GM12878 (cell line): ENCODE measurements at regions of chr11 and their contacts with region 1.

Region 1: DNA sequence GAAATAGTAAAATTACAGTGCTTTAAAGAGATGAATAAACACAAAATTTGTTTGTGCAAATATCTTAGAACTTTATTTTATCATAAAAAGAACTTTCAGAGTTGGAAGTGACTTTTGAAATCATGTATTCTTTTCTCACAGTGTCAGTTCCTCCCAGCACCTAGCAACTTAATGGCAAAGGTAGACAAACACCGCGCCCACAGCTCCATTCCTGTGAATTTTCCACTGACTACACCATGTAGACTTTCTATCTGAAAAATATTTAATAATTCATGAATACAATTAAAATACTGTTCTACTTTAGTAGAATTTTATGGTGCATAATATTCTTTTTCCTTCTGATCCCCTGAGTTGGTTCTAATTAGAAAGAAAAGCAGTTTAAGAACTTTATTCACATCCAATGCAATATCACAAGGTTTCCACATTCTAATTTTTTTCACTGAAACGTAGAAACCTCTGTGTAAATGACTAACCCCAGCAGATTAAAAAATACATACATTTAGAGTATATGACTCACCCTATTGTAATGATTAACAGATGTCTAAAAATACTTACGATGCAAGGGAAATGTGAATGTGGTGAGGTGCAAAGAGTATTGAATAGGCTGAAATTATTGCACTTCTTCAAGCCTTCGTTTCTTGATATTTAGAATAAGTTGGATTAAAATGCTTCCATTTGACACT is 218.2 kb upstream of the CCDC179 start:
- DNase-seq: no peak
- ATAC-seq: peak; percentile 90
- H3K4me3 ChIP-seq: no peak overlapping the region
- H3K27ac ChIP-seq: no peak overlapping the region
- H3K4me1 ChIP-seq: no peaks in the 10 kb centered on the region
- H3K27me3 ChIP-seq: no peaks in the 10 kb centered on the region
- CTCF ChIP-seq: no peak
- EP300 ChIP-seq: peak; percentile 21 to 67; a peak in 1 of 4 replicates
- POLR2A ChIP-seq: no peak
- RAD21 ChIP-seq: no peak

Region 2: GRCh38 chr11:22510741-22511140 is 567.7 kb before region 1 on chr11:
- CTCF ChIA-PET with region 1: no interaction called
- POLR2A ChIA-PET with region 1: no interaction called
- RAD21 ChIA-PET with region 1: no interaction called
- SMC1A ChIA-PET with region 1: no interaction called
- in situ Hi-C with region 1: no loop called
- intact Hi-C with region 1: no loop called
- DNase-seq: no peak
- ATAC-seq: no peak
- H3K4me3 ChIP-seq: no peak overlapping the region
- H3K27ac ChIP-seq: no peak overlapping the region
- H3K4me1 ChIP-seq: no peaks in the 10 kb centered on the region
- H3K27me3 ChIP-seq: no peaks in the 10 kb centered on the region
- CTCF ChIP-seq: no peak
- EP300 ChIP-seq: no peak
- POLR2A ChIP-seq: no peak
- RAD21 ChIP-seq: no peak

Region 3: GRCh38 chr11:23058656-23059055 is 19.8 kb before region 1 on chr11:
- CTCF ChIA-PET with region 1: interaction called, 4 read pairs
- POLR2A ChIA-PET with region 1: no interaction called
- RAD21 ChIA-PET with region 1: interaction called, 9 read pairs
- SMC1A ChIA-PET with region 1: interaction called, 10 read pairs
- in situ Hi-C with region 1: no loop called
- intact Hi-C with region 1: no loop called
- DNase-seq: no peak
- ATAC-seq: no peak
- H3K4me3 ChIP-seq: no peak overlapping the region
- H3K27ac ChIP-seq: no peak overlapping the region
- H3K4me1 ChIP-seq: no peaks in the 10 kb centered on the region
- H3K27me3 ChIP-seq: no peaks in the 10 kb centered on the region
- CTCF ChIP-seq: no peak
- EP300 ChIP-seq: no peak
- POLR2A ChIP-seq: no peak
- RAD21 ChIP-seq: no peak

Region 4: GRCh38 chr11:23097891-23098290 is 19.5 kb after region 1 on chr11:
- CTCF ChIA-PET with region 1: interaction called, 4 read pairs
- POLR2A ChIA-PET with region 1: interaction called, 3 read pairs
- RAD21 ChIA-PET with region 1: interaction called, 19 read pairs
- SMC1A ChIA-PET with region 1: interaction called, 28 read pairs
- in situ Hi-C with region 1: no loop called
- intact Hi-C with region 1: no loop called
- DNase-seq: no peak
- ATAC-seq: peak; percentile 92
- H3K4me3 ChIP-seq: no peak overlapping the region
- H3K27ac ChIP-seq: no peak overlapping the region
- H3K4me1 ChIP-seq: no peaks in the 10 kb centered on the region
- H3K27me3 ChIP-seq: no peaks in the 10 kb centered on the region
- CTCF ChIP-seq: no peak
- EP300 ChIP-seq: no peak
- POLR2A ChIP-seq: no peak
- RAD21 ChIP-seq: no peak

Region 5: DNA sequence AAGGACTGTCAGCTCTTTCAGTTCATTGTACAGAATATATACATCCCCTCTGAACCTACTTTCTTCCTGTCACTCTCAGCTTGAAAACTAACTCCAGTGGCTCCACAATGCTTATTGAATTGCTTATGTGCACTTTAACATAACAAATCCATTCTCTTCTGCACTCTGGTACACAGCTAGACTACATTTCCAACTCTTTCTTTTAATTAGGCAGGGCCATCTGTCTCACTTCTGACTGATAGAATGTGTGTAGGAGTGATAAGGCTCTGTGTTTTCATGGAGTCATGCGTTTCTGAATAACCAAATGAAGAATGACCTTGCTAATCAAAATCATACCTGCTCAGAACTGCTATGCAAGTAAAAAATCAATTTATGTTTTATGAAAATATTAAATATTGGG is 60.3 kb after region 1 on chr11:
- CTCF ChIA-PET with region 1: no interaction called
- POLR2A ChIA-PET with region 1: no interaction called
- RAD21 ChIA-PET with region 1: no interaction called
- SMC1A ChIA-PET with region 1: no interaction called
- in situ Hi-C with region 1: no loop called
- intact Hi-C with region 1: no loop called
- DNase-seq: no peak
- ATAC-seq: no peak
- H3K4me3 ChIP-seq: no peak overlapping the region
- H3K27ac ChIP-seq: no peak overlapping the region
- H3K4me1 ChIP-seq: no peaks in the 10 kb centered on the region
- H3K27me3 ChIP-seq: no peaks in the 10 kb centered on the region
- CTCF ChIP-seq: no peak
- EP300 ChIP-seq: no peak
- POLR2A ChIP-seq: no peak
- RAD21 ChIP-seq: no peak

Region 6: GRCh38 chr11:23704183-23704582 is 625.8 kb after region 1 on chr11:
- CTCF ChIA-PET with region 1: no interaction called
- POLR2A ChIA-PET with region 1: no interaction called
- RAD21 ChIA-PET with region 1: no interaction called
- SMC1A ChIA-PET with region 1: no interaction called
- in situ Hi-C with region 1: no loop called
- intact Hi-C with region 1: no loop called
- DNase-seq: no peak
- ATAC-seq: no peak
- H3K4me3 ChIP-seq: no peak overlapping the region
- H3K27ac ChIP-seq: no peak overlapping the region
- H3K4me1 ChIP-seq: no peaks in the 10 kb centered on the region
- H3K27me3 ChIP-seq: no peaks in the 10 kb centered on the region
- CTCF ChIP-seq: no peak
- EP300 ChIP-seq: no peak
- POLR2A ChIP-seq: no peak
- RAD21 ChIP-seq: no peak